Activated B cell treated with CpG ODN at 0.5 μM for 24 hours (primary cell): ENCODE measurements at regions of chr7 and their contacts with region 1.

Region 1: DNA sequence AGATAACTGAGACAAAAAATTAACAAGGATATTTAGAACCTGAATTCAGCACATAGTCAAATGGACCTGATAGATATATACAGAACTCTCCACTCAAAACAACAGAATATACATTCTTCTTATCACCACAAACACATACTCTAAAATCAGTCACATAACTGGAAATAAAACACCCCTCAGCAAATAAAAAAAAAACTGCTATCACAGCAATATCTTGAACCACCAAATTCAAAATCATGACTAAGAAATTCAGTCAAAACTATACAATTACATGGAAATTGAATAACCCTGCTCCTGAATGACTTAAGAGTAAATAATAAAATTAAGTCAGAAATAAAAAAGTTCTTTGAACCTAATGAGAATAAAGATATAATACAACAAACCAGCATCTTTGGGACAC is 30.0 kb upstream of the ZNF722 start:
- DNase-seq: no peak
- ATAC-seq: no peak
- H3K4me3 Mint-ChIP-seq: no peak overlapping the region
- H3K27ac Mint-ChIP-seq: no peak overlapping the region
- H3K4me1 Mint-ChIP-seq: no peaks in the 10 kb centered on the region
- H3K27me3 Mint-ChIP-seq: no peaks in the 10 kb centered on the region
- CTCF ChIP-seq: no peak

Region 2: GRCh38 chr7:63900394-63901203 is 68.0 kb before region 1 on chr7:
- CTCF ChIA-PET with region 1: no interaction called
- POLR2A ChIA-PET with region 1: no interaction called
- intact Hi-C with region 1: loop called (anchors 10 kb)
- DNase-seq: peak; percentile 61
- ATAC-seq: peak; percentile 92
- H3K4me3 Mint-ChIP-seq: peak overlapping the region; percentile 96
- H3K27ac Mint-ChIP-seq: peak overlapping the region; percentile 95
- H3K4me1 Mint-ChIP-seq: peaks cover 2% of the 10 kb centered on the region
- H3K27me3 Mint-ChIP-seq: no peaks in the 10 kb centered on the region
- CTCF ChIP-seq: no peak